Right cardiac atrium (tissue), 5 donors: ENCODE measurements at regions of chr20 and their contacts with region 1.

Region 1: DNA sequence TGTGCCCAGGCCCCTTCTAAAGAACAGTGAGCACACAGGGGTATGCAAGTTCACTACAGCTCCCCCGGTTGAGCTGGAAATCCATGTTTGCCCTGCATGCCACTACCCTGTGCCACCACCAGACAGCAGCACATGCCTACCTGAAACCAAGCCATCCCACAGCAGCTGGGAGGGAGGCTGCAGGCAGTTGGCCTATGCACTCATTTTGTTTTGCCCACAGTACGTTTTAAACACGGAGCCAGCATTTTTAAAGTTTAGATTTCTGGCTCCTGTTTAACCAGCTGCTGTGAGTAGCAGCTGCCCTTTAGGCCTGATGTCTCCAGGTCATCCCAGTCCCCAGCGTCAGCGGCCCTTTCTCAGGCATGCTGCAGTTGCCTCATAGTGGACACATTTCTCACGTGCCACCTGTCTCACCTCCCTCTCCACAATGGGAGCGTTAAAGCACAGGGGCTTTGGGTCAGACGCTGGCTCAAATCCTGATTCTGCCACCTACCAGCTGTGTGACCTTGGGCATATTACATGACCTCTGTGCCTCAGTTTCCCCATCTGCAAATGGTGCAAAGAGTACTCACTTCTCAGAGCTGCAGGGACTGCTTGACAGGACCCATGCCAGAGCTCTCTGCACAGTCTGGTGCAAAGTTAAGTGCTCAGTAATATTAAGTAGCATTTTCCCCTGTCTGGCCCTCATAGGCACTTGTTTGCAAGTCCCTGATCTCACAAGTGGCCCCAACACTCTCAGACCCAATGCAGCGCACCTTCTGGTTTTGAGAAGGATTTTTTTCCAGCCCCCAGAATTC is 8.1 kb upstream of the UBE2V1 start:
- DNase-seq: peak; percentile 58 to 80 (median 78)
- ATAC-seq: peak; percentile 77 to 78
- H3K4me3 ChIP-seq: no peak overlapping the region
- H3K27ac ChIP-seq: no peak overlapping the region
- H3K4me1 ChIP-seq: peaks cover 3% of the 10 kb centered on the region
- H3K27me3 ChIP-seq: no peaks in the 10 kb centered on the region

Region 2: GRCh38 chr20:50165684-50166554 is 44.8 kb after region 1 on chr20:
- intact Hi-C with region 1: loop called (anchors 2 to 5 kb)
- DNase-seq: peak; percentile 96 to 98 (median 98)
- ATAC-seq: peak; percentile 98
- H3K4me3 ChIP-seq: peak overlapping the region; percentile 23
- H3K27ac ChIP-seq: peak overlapping the region; percentile 99
- H3K4me1 ChIP-seq: no peaks in the 10 kb centered on the region
- H3K27me3 ChIP-seq: no peaks in the 10 kb centered on the region

Region 3: GRCh38 chr20:50172347-50173013 is 51.4 kb after region 1 on chr20:
- intact Hi-C with region 1: loop called (anchors 2 to 5 kb)
- DNase-seq: peak; percentile 90 to 96 (median 95)
- ATAC-seq: peak; percentile 96
- H3K4me3 ChIP-seq: peak overlapping the region; percentile 71
- H3K27ac ChIP-seq: peak overlapping the region; percentile 83
- H3K4me1 ChIP-seq: no peaks in the 10 kb centered on the region
- H3K27me3 ChIP-seq: no peaks in the 10 kb centered on the region